ENCODE measurements at regions of chr1 and their contacts with region 1.

Region 1: GRCh38 chr1:156689035-156689952 is 12.1 kb upstream of the NES start:
- DNase-seq: peak; percentile 90
- H3K4me3 ChIP-seq: peak overlapping the region; percentile 39
- H3K27ac ChIP-seq: no peak overlapping the region
- H3K4me1 ChIP-seq: peaks cover 22% of the 10 kb centered on the region
- H3K27me3 ChIP-seq: peaks cover 4% of the 10 kb centered on the region
- CTCF ChIP-seq: peak; percentile 80

Region 2: DNA sequence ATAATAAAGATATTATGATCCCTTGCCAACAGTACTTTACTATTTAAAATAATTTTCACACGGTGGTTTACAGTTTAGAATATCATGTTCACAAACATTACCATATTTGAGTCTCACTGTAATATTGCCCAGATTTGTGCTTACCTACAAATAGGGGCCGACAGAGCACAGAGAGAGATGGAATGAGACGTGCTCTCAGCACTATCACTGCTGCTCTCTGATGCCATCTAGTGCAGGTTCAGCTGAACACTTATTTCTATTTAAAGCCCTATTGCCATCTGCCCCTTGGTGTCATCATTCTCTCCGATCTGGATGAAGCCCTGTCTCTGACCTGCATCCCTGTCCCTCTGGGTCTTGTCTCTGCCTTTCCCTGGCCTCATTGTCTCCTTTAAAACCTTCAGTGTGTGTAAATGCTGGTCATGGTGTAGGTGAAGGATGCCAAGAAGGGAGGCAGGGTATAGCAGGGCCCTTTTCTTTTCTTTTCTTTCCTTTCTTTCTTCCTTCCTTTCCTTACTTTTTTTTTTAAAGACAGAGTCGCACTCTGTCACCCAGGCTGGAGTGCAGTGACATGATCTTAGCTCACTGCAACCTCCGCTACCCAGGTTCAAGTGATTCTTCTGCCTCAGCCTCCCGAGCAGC is 81.1 kb before region 1 on chr1:
- CTCF ChIA-PET with region 1: no interaction called
- POLR2A ChIA-PET with region 1: no interaction called
- intact Hi-C with region 1: no loop called
- DNase-seq: peak; percentile 80
- H3K4me3 ChIP-seq: no peak overlapping the region
- H3K27ac ChIP-seq: no peak overlapping the region
- H3K4me1 ChIP-seq: no peaks in the 10 kb centered on the region
- H3K27me3 ChIP-seq: no peaks in the 10 kb centered on the region
- CTCF ChIP-seq: peak; percentile 83

Region 3: GRCh38 chr1:156705918-156706656 is 16.8 kb after region 1 on chr1:
- CTCF ChIA-PET with region 1: interaction called, 48 read pairs
- POLR2A ChIA-PET with region 1: no interaction called
- intact Hi-C with region 1: loop called (anchors 1 kb)
- DNase-seq: peak; percentile 77
- H3K4me3 ChIP-seq: peak overlapping the region; percentile 42
- H3K27ac ChIP-seq: no peak overlapping the region
- H3K4me1 ChIP-seq: peaks cover 34% of the 10 kb centered on the region
- H3K27me3 ChIP-seq: peaks cover 5% of the 10 kb centered on the region
- CTCF ChIP-seq: peak; percentile 91

Region 4: GRCh38 chr1:156733989-156734584 is 44.8 kb after region 1 on chr1:
- CTCF ChIA-PET with region 1: interaction called, 117 read pairs
- POLR2A ChIA-PET with region 1: interaction called, 11 read pairs
- intact Hi-C with region 1: no loop called
- DNase-seq: no peak
- H3K4me3 ChIP-seq: no peak overlapping the region
- H3K27ac ChIP-seq: no peak overlapping the region
- H3K4me1 ChIP-seq: no peaks in the 10 kb centered on the region
- H3K27me3 ChIP-seq: no peaks in the 10 kb centered on the region
- CTCF ChIP-seq: no peak

Region 5: DNA sequence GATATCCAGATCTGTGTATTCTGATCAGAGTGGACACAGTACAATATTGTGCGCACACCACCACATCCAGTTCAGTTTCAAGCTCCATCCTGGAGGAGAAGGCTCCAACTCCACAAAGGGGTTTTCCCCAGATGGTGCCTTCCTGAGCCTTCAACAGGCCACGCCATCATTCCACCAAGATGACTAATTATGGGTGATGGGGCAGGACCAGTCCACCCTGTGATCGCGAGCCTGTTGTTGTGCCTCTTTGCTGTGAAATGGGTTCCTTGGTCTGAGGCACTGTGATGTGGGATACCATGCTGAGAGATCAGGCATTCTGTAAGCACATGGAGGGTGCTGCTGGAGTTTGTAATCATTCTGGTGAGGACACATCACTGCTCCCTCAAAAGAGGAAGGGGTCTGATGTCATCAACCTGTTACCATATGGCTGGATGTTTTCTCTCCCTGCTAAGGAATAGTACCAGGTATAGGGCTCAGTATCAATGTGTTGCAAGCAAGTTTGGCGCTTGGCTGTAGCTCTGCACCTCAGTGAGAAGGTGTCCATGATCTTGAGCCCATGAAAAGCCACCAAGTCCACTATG is 134.0 kb after region 1 on chr1:
- CTCF ChIA-PET with region 1: no interaction called
- POLR2A ChIA-PET with region 1: no interaction called
- intact Hi-C with region 1: no loop called
- DNase-seq: no peak
- H3K4me3 ChIP-seq: no peak overlapping the region
- H3K27ac ChIP-seq: no peak overlapping the region
- H3K4me1 ChIP-seq: no peaks in the 10 kb centered on the region
- H3K27me3 ChIP-seq: no peaks in the 10 kb centered on the region
- CTCF ChIP-seq: no peak

Region 6: GRCh38 chr1:156860113-156860627 is 170.9 kb after region 1 on chr1:
- CTCF ChIA-PET with region 1: interaction called, 55 read pairs
- POLR2A ChIA-PET with region 1: no interaction called
- intact Hi-C with region 1: loop called (anchors 1 kb)
- DNase-seq: peak; percentile 63
- H3K4me3 ChIP-seq: peak overlapping the region; percentile 55
- H3K27ac ChIP-seq: no peak overlapping the region
- H3K4me1 ChIP-seq: peaks cover 10% of the 10 kb centered on the region
- H3K27me3 ChIP-seq: peaks cover 27% of the 10 kb centered on the region
- CTCF ChIP-seq: peak; percentile 94

Region 7: GRCh38 chr1:156892190-156893047 is 203.1 kb after region 1 on chr1:
- CTCF ChIA-PET with region 1: interaction called, 33 read pairs
- POLR2A ChIA-PET with region 1: no interaction called
- intact Hi-C with region 1: loop called (anchors 1 kb)
- DNase-seq: peak; percentile 93
- H3K4me3 ChIP-seq: peak overlapping the region; percentile 29
- H3K27ac ChIP-seq: no peak overlapping the region
- H3K4me1 ChIP-seq: no peaks in the 10 kb centered on the region
- H3K27me3 ChIP-seq: no peaks in the 10 kb centered on the region
- CTCF ChIP-seq: peak; percentile 96

Region 8: GRCh38 chr1:156927215-156928042 is 238.1 kb after region 1 on chr1:
- CTCF ChIA-PET with region 1: interaction called, 12 read pairs
- POLR2A ChIA-PET with region 1: interaction called, 3 read pairs
- intact Hi-C with region 1: loop called (anchors 10 kb)
- DNase-seq: peak; percentile 85
- H3K4me3 ChIP-seq: peak overlapping the region; percentile 31
- H3K27ac ChIP-seq: no peak overlapping the region
- H3K4me1 ChIP-seq: no peaks in the 10 kb centered on the region
- H3K27me3 ChIP-seq: peaks cover 35% of the 10 kb centered on the region
- CTCF ChIP-seq: peak; percentile 81

Region 9: DNA sequence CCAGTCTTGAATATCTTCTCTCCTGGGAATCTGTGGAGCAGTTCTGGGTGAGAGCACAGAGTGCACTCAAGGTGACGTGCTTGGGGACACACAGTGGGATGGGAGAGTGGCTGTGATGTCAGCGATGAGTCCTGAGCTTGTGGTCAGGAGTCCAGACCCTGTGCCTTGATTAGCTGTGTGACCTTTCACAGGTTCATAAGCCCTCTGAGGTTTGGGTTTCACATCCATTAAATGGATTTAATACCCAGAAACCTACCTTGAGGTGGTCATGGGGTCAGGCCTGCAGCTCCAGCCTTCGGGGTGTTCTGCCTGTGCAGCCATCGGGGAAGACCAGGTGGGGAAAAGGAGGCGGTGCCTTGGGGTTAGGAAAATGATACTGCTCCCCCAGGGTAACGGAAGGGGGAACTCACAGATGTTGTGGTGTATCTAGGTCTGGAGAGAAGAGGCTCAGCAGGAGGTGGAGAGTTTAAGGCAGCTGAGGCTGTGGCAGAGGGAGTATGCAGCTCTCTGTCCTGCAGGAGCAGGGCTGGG is 487.4 kb after region 1 on chr1:
- CTCF ChIA-PET with region 1: no interaction called
- POLR2A ChIA-PET with region 1: no interaction called
- intact Hi-C with region 1: no loop called
- DNase-seq: no peak
- H3K4me3 ChIP-seq: no peak overlapping the region
- H3K27ac ChIP-seq: no peak overlapping the region
- H3K4me1 ChIP-seq: no peaks in the 10 kb centered on the region
- H3K27me3 ChIP-seq: no peaks in the 10 kb centered on the region
- CTCF ChIP-seq: no peak

Measured in A673 (cell line).